Dorsolateral prefrontal cortex (tissue), 120 donors: ENCODE measurements at regions of chr2 and their contacts with region 1.

Region 1: DNA sequence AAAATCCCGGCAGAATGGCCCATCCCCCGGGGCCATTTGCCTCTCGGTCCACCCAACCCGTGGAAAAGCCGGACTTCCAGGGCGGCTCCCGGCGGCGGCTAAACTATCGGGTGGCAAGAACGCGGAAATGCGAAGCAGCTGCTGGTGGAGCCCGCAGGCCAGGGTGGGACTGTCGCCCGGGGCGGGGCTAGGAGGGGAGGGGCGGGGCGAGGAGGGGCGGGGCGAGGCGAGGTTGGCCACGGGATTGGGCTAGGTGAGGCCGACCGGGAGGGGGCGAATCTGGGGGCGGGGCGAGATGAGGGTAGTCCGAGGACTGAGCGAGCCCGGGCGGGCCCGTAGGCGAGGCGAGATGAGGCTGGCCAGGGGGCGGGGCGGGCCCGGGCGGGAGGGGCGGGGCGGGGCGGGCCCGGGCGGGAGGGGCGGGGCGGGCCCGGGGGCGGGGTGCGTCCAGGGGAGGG is 315 bp upstream of the SLC66A3 start:
- DNase-seq: peak; percentile 88 to 96 (median 93)
- H3K4me3 ChIP-seq: peak overlapping the region; percentile 19 to 99 (median 88)
- H3K27ac ChIP-seq: peak overlapping the region in 56 of 59 donors; percentile 22 to 94 (median 85)
- H3K27me3 ChIP-seq: no peaks in the 10 kb centered on the region
- CTCF ChIP-seq: no peak

Region 2: GRCh38 chr2:11050565-11050964 is 104.4 kb before region 1 on chr2:
- intact Hi-C with region 1: no loop called
- DNase-seq: no peak
- H3K4me3 ChIP-seq: no peak overlapping the region
- H3K27ac ChIP-seq: peak overlapping the region in 4 of 59 donors; percentile 21 to 67 (median 36)
- H3K27me3 ChIP-seq: peaks cover 0 to 3% (median 0%) of the 10 kb centered on the region in 45 donors
- CTCF ChIP-seq: no peak

Region 3: GRCh38 chr2:11097038-11097720 is 57.8 kb before region 1 on chr2:
- intact Hi-C with region 1: no loop called
- DNase-seq: no peak
- H3K4me3 ChIP-seq: no peak overlapping the region
- H3K27ac ChIP-seq: no peak overlapping the region
- H3K27me3 ChIP-seq: no peaks in the 10 kb centered on the region
- CTCF ChIP-seq: no peak

Region 4: DNA sequence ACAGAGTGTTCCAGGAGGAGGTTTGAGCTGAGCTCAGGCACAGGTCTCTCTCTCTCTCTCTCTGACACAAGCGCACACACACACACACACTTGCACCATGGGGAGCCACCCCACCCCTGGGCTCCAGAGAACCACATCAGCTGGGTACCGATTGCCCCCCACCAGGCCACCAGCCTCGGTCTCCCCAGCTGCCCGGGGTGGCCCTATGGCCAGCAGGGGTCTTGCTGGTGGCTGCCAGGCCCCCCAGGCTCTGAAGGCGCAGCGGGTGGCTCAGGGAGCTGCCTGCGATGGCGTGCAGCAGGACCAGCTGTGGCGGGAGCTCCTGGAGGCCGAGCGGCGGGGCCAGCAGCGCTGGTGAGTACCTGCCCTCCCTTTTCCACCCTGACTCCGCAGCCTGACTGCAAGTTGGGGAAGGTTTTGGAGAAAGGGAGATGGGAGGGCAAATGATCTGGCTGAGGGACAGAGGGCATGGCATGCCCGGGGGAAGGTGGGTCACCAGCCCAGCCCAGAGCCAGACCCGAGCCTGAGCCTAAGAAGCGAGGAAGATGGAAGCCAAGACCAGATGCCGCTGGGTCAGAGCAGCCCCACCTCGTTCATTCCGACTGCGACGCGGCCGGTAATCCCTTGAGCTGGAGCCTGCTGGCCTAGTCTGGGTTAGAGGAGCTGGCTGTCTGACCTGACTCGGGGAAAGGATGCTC is 21.6 kb before region 1 on chr2:
- intact Hi-C with region 1: no loop called
- DNase-seq: peak in 1 of 10 donors; percentile 48
- H3K4me3 ChIP-seq: peak overlapping the region; percentile 16 to 74 (median 56)
- H3K27ac ChIP-seq: peak overlapping the region in 48 of 59 donors; percentile 1 to 87 (median 64)
- H3K27me3 ChIP-seq: peaks cover 0 to 8% (median 0%) of the 10 kb centered on the region in 45 donors
- CTCF ChIP-seq: no peak

Region 5: GRCh38 chr2:11459816-11460215 is 304.9 kb after region 1 on chr2:
- intact Hi-C with region 1: loop called (anchors 5 to 10 kb)
- DNase-seq: no peak
- H3K4me3 ChIP-seq: no peak overlapping the region
- H3K27ac ChIP-seq: no peak overlapping the region
- H3K27me3 ChIP-seq: no peaks in the 10 kb centered on the region
- CTCF ChIP-seq: no peak

Region 6: DNA sequence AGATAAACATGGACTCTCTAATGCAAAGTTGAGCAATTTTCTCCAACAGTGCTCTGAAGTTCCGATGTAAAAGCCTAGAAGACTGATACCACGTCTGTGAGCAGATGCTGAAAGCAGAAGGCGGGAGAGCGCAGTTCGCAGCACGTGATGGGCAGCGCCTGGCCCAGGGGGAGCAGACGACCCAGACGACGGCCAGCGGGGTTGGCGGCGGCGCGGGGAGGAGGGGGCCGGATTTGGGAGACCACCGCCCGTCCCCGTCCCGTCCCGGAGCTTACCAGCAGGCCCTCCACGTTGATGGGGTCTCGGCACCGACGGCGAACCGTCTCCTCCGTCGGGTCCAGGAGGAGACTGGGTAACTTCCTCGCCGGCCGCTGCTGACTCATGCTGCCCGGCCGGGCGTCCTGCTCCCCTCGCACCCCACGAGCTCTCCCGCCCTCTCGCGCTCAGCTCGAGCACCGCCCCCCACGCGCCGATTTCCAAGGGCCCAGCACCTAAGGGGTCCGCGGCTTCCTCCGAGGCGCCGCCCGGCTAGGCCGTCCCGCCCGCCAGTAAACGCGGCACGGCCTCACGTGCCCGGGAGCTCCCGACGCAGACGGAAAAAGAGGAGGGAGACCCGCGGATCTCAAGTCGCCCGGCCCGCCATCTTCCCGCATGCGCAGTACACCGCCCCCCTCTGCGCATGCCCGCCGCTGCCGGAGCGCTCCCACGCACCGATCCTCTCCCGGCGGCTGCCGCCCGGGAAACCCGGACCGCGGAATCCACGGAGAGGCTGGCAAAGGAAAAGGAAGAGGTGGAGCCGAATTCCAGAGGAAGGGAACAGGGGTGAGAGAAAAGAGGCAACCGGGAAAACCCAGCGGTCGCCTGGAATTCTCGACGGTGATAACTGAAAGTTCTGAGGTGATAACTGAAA is 310.8 kb after region 1 on chr2 and contains the start of gene E2F6:
- intact Hi-C with region 1: loop called (anchors 5 to 10 kb)
- DNase-seq: peak; percentile 83 to 95 (median 90)
- H3K4me3 ChIP-seq: peak within 1 kb of the TSS; percentile 66 to 97 (median 86)
- H3K27ac ChIP-seq: peak within 1 kb of the TSS; percentile 66 to 96 (median 87)
- H3K27me3 ChIP-seq: no peaks in the 10 kb centered on the region
- CTCF ChIP-seq: peak in 31 of 56 donors; percentile 1 to 54 (median 26)
- total RNA-seq, gene E2F6: 8.2 to 19.7 (median 12.6) TPM